ENCODE measurements at regions of chr2 and their contacts with region 1.

Region 1: DNA sequence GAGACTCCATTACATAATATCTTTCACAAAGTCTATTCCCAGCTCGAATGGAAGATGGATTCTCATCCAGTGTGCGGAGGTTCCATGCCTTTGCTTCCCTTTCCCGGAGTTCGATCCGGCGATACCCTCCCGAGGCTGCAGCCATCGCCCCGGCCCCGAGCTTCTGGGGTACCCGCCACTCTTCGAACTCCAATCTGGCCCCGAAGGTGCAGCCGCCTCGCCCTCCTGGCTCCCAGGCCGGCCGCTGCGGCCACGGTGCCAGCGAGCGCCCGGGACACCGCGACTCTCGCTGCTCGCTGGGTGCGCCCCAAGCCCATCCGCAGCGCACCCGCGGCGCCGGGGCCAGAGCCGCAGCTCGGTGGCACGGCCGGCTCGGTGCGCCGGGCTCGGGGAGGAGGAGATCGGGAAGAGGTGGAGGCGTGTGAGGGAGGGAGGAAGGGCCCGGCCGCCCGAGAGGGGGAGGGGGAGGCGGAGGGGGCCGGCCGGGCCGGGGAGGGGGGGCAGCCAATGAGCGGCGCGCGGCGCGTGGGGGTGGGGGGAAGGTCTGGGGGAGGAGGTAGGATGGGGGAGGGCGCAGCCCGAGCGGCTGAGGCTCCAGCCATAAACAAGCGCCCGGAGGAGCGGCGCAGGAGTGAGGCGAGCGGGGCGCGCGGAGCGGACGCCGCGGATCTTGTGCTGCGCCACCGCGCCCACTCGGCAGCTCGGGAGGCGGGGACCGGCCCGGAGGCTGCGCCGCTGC is at the start of gene CRIM1:
- H3K4me3 Mint-ChIP-seq: peak within 1 kb of the TSS; percentile 81
- H3K27ac Mint-ChIP-seq: peak within 1 kb of the TSS; percentile 82
- H3K4me1 Mint-ChIP-seq: peaks cover 56% of the 10 kb centered on the region
- H3K27me3 Mint-ChIP-seq: peaks cover 53% of the 10 kb centered on the region

Region 2: DNA sequence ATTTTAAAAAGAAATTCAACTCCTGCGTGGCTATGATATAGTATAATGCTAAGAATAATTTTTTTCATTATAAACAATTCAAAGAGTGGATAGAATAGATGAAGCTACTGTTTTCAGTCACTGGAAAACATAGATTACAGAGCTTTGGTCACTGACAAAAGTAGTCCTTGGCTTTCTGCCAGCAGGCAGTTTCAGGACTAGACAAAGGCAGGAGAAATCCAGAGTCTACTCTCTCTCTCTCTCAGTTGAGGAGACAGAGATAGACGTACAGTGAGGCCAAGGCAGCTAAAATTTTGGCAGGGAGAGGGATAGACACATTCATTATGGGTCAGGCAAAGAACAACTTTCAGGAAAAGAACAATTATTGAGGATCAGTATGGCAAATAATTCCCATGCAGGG is 491.2 kb before region 1 on chr2:
- intact Hi-C with region 1: no loop called
- H3K4me3 Mint-ChIP-seq: no peak overlapping the region
- H3K27ac Mint-ChIP-seq: no peak overlapping the region
- H3K4me1 Mint-ChIP-seq: no peaks in the 10 kb centered on the region
- H3K27me3 Mint-ChIP-seq: peaks cover 2% of the 10 kb centered on the region

Region 3: GRCh38 chr2:36376319-36376765 is 21.0 kb after region 1 on chr2:
- intact Hi-C with region 1: no loop called
- H3K4me3 Mint-ChIP-seq: no peak overlapping the region
- H3K27ac Mint-ChIP-seq: no peak overlapping the region
- H3K4me1 Mint-ChIP-seq: peaks cover 32% of the 10 kb centered on the region
- H3K27me3 Mint-ChIP-seq: no peaks in the 10 kb centered on the region

Region 4: DNA sequence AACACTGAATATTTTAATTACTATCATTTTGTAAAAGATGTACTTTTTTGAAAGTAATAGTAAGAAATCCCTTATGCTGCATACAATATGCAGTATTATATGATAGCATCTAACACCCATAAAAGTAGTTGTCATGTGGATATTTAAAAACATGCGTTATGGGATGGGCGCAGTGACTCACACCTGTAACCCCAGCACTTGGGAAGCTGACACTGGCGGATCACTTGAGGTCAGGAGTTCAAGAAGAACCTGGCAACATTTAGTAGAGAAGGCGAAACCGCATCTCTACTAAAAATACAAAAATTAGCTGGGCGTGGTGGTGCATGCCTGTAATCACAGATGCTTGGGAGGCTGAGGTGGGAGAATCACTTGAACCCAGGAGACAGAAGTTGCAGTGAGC is 153.8 kb after region 1 on chr2:
- intact Hi-C with region 1: loop called (anchors 2 kb)
- H3K4me3 Mint-ChIP-seq: no peak overlapping the region
- H3K27ac Mint-ChIP-seq: no peak overlapping the region
- H3K4me1 Mint-ChIP-seq: no peaks in the 10 kb centered on the region
- H3K27me3 Mint-ChIP-seq: no peaks in the 10 kb centered on the region

Region 5: GRCh38 chr2:36663851-36664695 is 308.8 kb after region 1 on chr2:
- intact Hi-C with region 1: loop called (anchors 1 kb)
- H3K4me3 Mint-ChIP-seq: no peak overlapping the region
- H3K27ac Mint-ChIP-seq: no peak overlapping the region
- H3K4me1 Mint-ChIP-seq: no peaks in the 10 kb centered on the region
- H3K27me3 Mint-ChIP-seq: no peaks in the 10 kb centered on the region

Region 6: DNA sequence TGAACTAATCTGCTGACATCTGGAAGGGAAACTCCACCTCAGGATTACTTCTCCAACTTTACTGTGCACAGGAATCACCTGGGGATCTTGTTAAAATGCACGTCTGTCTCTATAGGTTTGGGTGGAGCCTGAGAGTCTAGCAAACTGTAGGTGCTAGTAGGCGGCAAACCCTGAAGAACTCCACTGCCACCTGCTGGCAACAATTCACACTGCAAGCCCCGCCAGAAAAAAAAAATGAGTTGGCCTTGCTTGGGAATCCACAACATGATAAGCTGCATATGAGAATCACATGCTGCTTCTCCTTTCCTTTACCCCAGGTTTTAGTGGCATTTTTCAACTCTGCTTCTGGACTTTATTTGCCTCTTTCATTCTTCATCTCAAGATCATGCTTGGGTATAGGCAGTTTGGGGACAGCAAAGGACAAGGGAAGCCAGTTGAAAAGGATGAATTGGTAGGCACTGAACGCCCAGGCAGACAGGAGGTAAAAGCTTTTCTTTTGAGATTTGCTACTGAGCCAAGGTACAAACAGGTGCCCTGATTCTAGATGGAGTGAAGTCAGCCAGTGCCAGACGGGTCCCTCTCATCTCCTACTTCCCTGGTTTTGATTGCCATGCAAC is 430.0 kb after region 1 on chr2:
- intact Hi-C with region 1: loop called (anchors 10 kb)
- H3K4me3 Mint-ChIP-seq: no peak overlapping the region
- H3K27ac Mint-ChIP-seq: no peak overlapping the region
- H3K4me1 Mint-ChIP-seq: peaks cover 18% of the 10 kb centered on the region
- H3K27me3 Mint-ChIP-seq: no peaks in the 10 kb centered on the region

Region 7: DNA sequence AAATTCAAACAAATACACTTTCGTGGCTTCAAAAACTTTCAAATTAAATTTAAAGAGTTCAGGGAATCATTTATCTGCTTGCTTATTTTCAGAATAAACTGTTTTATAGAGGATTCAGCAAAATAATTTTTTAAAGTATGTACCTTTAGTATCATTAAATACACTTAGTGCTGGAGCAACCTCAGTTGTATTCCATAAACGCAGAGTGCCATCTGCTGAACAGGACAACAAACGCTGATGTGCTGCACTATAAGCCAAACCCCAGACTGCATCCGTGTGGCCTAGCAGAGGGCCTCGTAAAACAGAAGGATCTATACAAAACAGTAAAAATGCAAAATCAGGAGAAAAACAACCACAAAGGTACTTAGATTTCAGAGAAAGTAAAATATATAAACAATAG is 502.4 kb after region 1 on chr2:
- intact Hi-C with region 1: no loop called
- H3K4me3 Mint-ChIP-seq: no peak overlapping the region
- H3K27ac Mint-ChIP-seq: no peak overlapping the region
- H3K4me1 Mint-ChIP-seq: peaks cover 9% of the 10 kb centered on the region
- H3K27me3 Mint-ChIP-seq: no peaks in the 10 kb centered on the region

Measured in dendritic cell treated with granulocyte-macrophage colony-stimulating factor and Interleukin-4, amounts not matched to agents 40 ng/mL and 50 ng/mL, for 4 days (primary cell).